Left cardiac atrium (tissue), 4 donors: ENCODE measurements at regions of chr11 and their contacts with region 1.

Region 1: DNA sequence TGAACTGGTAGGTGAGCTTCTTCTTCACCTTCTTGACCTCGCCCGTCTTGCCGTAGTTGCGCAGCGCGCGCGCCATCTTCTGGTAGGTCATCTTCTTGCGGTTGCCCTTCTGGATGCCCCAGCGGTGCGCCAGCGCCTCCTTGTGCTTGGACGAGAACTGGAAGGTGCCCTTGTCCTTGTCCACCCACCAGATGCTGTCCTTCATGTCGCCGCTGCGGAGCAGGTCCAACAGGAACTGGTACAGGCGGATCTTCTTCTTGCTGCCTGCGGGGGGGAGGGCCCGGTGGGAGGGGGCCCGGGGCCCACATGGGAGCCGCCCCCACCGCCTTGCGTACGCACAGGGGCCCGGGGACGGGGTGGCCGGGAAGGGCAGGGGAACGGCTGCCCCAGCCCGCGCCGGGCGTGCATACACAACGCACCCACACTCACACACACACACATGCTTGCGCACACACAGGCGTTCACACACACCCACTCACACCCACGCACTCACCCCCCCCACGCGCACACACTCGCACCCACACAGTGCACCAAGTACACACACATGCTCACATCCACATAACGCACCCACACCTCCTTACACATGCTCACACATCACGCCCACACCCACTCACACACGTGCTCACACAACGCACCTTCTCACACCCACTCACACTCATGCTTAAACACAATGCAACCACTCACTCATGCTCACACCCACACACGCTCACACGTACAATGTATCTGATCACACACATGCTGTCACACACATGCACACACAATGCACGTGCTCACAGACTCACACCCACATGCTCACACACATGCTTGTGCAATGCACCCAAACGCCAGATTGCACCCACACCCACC is 3.0 kb upstream of the MYBPC3 start:
- DNase-seq: peak; percentile 95
- ATAC-seq: peak; percentile 56 to 63

Region 2: DNA sequence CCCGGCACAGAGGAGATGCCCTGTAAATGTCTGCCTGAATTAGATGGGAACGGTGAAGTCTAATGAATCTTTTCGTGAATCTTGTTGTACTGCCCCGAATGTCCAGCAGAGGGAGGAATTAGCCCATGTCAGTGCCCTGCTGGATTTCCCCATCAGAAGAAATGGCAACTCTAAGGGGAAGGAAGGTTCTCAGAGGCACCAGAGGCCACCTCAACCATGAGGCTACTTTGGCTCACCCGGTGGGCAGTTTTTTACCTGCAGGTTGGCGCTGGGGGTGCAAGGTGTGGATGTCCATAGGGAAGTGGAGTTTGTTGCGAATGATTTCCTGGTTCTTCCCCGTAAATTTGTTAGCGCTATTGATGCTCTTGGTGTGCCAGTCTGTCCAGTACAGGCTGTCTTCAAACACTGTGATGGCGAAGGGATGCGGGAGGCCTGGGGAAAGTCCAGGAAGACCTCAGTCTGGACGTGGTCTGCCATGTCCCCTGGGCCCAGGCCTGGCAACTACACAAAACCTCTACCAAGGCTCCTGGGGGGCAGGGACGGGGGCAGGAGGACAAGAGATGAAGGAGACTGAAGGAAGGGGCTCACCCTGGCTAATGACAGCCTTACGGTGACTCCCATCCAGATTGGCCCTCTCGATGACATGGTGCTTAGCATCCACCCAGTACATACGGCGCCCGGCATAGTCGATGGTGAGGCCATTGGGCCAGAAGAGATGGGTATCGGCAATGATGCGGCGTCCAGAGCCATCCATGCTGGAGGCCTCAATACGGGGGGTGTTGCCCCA is 465.6 kb before region 1 on chr11:
- intact Hi-C with region 1: loop called (anchors 10 kb)
- DNase-seq: peak; percentile 59
- ATAC-seq: peak; percentile 82

Region 3: GRCh38 chr11:47186076-47186936 is 169.2 kb before region 1 on chr11 and contains the start of gene PACSIN3:
- intact Hi-C with region 1: loop called (anchors 5 kb)
- DNase-seq: peak; percentile 62
- ATAC-seq: peak; percentile 69 to 71
- total RNA-seq, gene PACSIN3: 108 to 126 TPM

Region 4: GRCh38 chr11:47259178-47259977 is 96.1 kb before region 1 on chr11:
- intact Hi-C with region 1: loop called (anchors 1 to 10 kb)
- DNase-seq: no peak
- ATAC-seq: peak in 1 of 2 donors; percentile 30

Region 5: DNA sequence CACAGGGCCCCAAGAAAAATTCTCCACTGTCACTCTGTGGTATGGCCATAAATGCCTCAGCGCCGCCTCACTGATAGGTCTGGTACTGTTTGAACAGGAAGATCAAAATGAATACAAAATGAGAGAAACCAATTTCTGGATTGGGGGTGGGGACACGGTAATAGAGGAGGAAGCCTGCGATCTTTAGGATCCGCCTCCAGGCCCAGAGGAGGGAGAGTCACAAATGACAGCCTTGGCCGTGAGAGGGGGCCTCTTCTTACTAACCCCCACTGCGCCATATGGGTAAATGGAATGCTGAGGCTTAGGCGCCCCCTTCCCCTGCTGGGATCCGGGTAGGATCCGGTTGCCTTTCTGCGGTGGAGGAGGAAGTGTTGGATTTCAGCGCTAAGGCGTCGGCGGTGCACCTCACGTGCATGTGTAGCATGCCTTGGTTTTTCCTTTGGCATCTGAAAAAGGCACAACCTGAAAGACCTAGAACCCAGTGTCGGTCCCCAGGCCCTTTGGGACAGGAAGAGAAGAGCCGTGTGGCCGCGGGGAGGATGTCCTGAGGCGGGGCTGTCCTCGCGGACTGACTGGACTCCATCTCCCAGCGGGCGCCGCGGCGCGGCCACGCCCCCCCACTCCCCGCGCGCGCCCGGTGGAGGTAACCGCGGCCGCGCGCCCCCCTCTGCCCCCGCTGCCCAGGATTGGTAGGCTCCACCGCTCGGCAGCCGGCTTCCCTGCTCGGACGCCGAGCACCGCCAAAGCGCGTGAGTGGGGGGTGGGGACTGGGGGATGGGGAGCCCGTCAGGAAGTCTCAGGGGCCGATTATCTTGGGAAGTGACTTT is 86.3 kb before region 1 on chr11:
- intact Hi-C with region 1: loop called (anchors 5 to 10 kb)
- DNase-seq: peak; percentile 93
- ATAC-seq: peak; percentile 93 to 94